ENCODE measurements at regions of chr10 and their contacts with region 1.

Region 1: GRCh38 chr10:95693668-95694534 is at the start of gene TCTN3:
- DNase-seq: peak; percentile 97 to 98 (median 98)
- ATAC-seq: peak; percentile 100
- H3K4me3 ChIP-seq: peak within 1 kb of the TSS; percentile 64 to 95 (median 81)
- H3K27ac ChIP-seq: peak within 1 kb of the TSS in 11 of 12 donors; percentile 58 to 92 (median 80)
- H3K4me1 ChIP-seq: peaks cover 0 to 36% (median 16%) of the 10 kb centered on the region in 12 donors
- H3K27me3 ChIP-seq: no peaks in the 10 kb centered on the region
- CTCF ChIP-seq: peak; percentile 98 to 100 (median 99)
- POLR2A ChIP-seq: peak in 1 of 2 donors; percentile 80
- total RNA-seq, gene TCTN3: 9.0 to 20.6 (median 12.3) TPM

Region 2: DNA sequence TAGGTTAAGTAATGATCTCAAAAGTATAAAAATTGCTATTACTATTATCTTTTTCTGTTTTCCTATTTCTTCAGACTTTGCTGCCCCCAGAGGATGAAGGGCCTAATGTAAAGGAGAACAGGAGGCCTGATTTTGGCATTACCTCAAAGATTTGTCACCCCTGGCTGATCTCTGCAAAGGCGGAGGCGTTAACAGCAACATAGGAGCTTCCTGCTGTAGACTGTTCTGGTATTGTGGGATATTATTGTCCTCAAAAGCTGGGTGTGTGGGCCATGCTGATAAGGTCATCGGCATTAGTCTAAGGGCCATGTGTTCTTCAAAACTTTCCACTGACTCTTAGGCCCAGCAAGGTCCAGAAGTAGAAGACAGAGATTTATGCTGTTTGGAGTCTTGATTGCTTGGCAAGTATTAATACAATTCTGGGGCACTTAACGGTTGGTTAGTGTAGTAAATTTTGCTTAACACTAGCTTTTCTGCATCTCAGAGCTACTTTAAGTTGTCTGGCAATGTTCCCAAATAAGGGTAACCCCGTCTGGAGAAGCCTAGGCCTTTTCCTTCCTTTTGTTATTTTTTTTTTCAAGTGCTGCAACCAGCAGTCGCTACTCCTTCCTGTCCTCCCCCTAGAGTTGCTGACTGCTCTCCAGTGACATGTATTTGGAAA is 48.0 kb after region 1 on chr10:
- intact Hi-C with region 1: loop called in 1 of 10 experiments (anchors 5 kb)
- DNase-seq: peak in 4 of 5 donors; percentile 37 to 73 (median 51)
- ATAC-seq: peak; percentile 93 to 98 (median 96)
- H3K4me3 ChIP-seq: no peak overlapping the region
- H3K27ac ChIP-seq: peak overlapping the region; percentile 64 to 88 (median 75)
- H3K4me1 ChIP-seq: peaks cover 0 to 36% (median 13%) of the 10 kb centered on the region in 12 donors
- H3K27me3 ChIP-seq: no peaks in the 10 kb centered on the region
- CTCF ChIP-seq: peak in 8 of 12 donors; percentile 8 to 46 (median 24)
- POLR2A ChIP-seq: no peak

Region 3: GRCh38 chr10:95841661-95842498 is 148.0 kb after region 1 on chr10:
- intact Hi-C with region 1: loop called (anchors 1 to 5 kb)
- DNase-seq: peak in 2 of 5 donors; percentile 40 to 49
- ATAC-seq: peak; percentile 57 to 89 (median 70)
- H3K4me3 ChIP-seq: no peak overlapping the region
- H3K27ac ChIP-seq: peak overlapping the region in 11 of 12 donors; percentile 5 to 83 (median 56)
- H3K4me1 ChIP-seq: peaks cover 0 to 41% (median 8%) of the 10 kb centered on the region in 12 donors
- H3K27me3 ChIP-seq: no peaks in the 10 kb centered on the region
- CTCF ChIP-seq: peak; percentile 58 to 80 (median 67)
- POLR2A ChIP-seq: no peak

Region 4: GRCh38 chr10:95864906-95865813 is 171.3 kb after region 1 on chr10:
- intact Hi-C with region 1: loop called in 9 of 10 experiments (anchors 1 to 5 kb)
- DNase-seq: peak in 2 of 5 donors; percentile 23 to 33
- ATAC-seq: peak in 3 of 4 donors; percentile 86 to 92 (median 89)
- H3K4me3 ChIP-seq: no peak overlapping the region
- H3K27ac ChIP-seq: no peak overlapping the region
- H3K4me1 ChIP-seq: peaks cover 0 to 2% (median 0%) of the 10 kb centered on the region in 12 donors
- H3K27me3 ChIP-seq: no peaks in the 10 kb centered on the region
- CTCF ChIP-seq: peak; percentile 49 to 78 (median 60)
- POLR2A ChIP-seq: no peak

Region 5: DNA sequence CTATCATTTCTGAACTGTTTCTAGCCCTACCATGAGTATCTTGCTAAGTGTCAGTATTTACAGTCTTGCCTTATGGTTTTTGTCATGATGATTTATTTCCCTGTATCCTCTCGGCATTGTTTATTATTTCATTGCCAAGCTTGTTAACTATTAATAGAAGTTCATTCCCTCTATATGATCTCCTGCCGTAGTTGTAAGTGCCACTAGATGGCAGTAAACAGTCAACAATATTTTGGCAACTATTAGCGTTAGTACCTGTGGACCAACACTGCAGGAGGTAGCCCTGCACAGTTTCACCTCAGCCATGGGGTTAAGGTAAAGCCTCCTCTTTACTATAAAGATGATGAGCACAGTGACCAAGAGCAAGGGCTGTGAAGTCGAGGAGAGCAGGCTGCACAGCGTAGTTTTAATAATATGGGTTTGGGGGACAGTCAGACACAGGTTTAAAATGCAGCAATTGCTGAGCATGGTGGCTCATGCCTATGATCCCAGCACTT is 323.3 kb after region 1 on chr10:
- intact Hi-C with region 1: loop called in 1 of 10 experiments (anchors 10 kb)
- DNase-seq: peak in 1 of 5 donors; percentile 12
- ATAC-seq: peak; percentile 26 to 85 (median 72)
- H3K4me3 ChIP-seq: no peak overlapping the region
- H3K27ac ChIP-seq: no peak overlapping the region
- H3K4me1 ChIP-seq: peaks cover 0 to 5% (median 0%) of the 10 kb centered on the region in 12 donors
- H3K27me3 ChIP-seq: no peaks in the 10 kb centered on the region
- CTCF ChIP-seq: peak; percentile 58 to 84 (median 74)
- POLR2A ChIP-seq: no peak

Region 6: DNA sequence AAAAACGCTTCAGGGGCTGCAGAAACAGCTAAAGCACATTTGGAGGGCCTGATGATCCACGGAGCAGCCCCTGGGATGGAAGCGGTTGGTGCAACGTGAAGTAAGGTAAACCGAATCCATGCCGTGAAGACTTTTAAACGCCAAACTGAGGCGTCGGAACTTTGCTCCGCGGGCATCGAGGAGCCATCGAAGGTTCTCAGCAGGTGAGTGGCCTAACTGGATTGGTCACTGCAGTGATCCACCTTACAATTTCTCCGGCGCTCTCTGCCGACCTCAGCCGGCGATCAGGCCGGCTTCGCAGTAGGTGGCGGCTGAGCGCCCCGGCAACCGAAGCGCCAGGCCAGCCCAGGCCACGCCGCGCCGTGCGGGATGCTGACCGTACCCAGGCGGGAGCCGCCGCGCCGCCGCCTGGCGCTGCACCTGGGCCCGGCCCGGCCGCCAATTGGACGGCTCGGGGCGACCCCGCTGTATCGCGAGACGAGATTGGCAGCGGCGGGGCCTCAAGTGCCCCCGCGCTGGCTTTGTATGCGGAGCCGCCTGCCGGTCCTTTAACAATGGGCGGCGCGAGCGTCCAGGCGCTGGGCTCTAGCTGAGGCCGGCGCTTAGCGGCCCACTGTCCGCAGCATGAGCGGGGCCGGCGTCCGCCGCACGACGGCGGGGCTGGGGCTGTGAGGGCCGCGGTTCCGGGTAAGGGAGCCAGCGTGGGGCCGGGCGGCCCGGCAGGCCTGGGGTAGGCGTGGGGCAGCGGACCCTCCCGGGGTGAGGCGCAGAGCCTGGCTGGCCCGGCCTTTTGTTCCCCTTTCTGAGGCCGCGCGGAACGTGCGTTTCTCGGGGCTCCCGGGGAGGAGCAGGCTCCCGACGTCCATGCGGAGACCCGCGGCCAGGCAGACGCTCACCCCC is 349.4 kb after region 1 on chr10 and contains the start of gene CCNJ:
- intact Hi-C with region 1: loop called in 1 of 10 experiments (anchors 10 kb)
- DNase-seq: peak; percentile 89 to 94 (median 90)
- ATAC-seq: peak; percentile 90 to 99 (median 98)
- H3K4me3 ChIP-seq: peak within 1 kb of the TSS; percentile 75 to 93 (median 88)
- H3K27ac ChIP-seq: peak within 1 kb of the TSS; percentile 31 to 92 (median 86)
- H3K4me1 ChIP-seq: peaks cover 0 to 22% (median 14%) of the 10 kb centered on the region in 12 donors
- H3K27me3 ChIP-seq: no peaks in the 10 kb centered on the region
- CTCF ChIP-seq: peak in 7 of 12 donors; percentile 9 to 47 (median 29)
- POLR2A ChIP-seq: peak; percentile 26 to 84
- total RNA-seq, gene CCNJ: 2.2 to 4.0 (median 2.7) TPM

Region 7: DNA sequence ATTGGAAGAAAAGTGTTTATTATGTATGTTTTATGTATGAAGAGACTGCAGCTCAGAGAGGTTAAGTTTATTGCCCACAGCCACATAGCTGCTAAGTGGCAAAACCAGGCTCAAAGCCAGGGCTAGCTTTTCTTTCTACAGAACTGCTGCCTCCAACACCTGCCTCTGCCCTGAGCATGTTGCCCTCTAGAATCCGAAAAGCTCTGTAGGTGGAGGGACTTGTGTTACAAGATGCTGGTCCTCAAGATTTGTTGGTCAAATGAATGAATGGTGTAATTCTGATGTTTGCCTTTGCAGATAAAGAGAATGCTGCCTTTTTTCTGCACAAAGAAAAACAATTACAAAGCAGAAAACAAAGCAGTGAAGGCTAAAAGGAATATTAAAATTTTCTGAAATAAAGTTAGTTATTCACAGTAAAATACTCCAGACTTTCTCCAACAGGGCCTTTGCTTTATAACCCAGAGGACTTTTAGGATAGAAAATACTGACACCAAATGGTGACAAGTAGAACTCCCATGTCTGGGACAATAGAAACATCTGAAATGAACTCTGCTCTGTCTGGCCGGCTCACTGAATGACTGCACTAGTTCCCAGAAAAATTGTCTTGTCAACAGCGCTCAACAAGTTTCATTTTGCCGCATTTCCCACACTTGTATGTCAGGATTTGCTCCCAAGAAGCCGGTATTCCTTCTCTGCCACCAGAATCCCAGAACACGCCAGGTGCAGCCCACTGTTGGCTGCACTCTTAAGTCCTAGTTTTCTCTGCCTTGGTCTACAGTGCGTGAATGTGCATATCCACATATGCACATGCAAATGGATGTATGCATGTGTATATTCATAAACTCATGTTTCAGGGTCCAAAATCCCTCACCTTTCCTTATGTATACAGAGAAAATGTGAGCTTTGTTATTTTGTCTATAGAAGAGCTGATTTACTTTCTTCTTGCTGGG is 599.3 kb after region 1 on chr10:
- intact Hi-C with region 1: loop called in 1 of 10 experiments (anchors 5 kb)
- DNase-seq: no peak
- ATAC-seq: peak; percentile 66 to 83 (median 77)
- H3K4me3 ChIP-seq: no peak overlapping the region
- H3K27ac ChIP-seq: no peak overlapping the region
- H3K4me1 ChIP-seq: peaks cover 0 to 5% (median 0%) of the 10 kb centered on the region in 12 donors
- H3K27me3 ChIP-seq: peaks cover 0 to 40% (median 3%) of the 10 kb centered on the region in 9 donors
- CTCF ChIP-seq: peak; percentile 33 to 72 (median 58)
- POLR2A ChIP-seq: no peak